Activated B cell treated with CpG ODN at 0.5 μM for 24 hours (primary cell): ENCODE measurements at regions of chr1 and their contacts with region 1.

Region 1: GRCh38 chr1:184075055-184076029 is 23.8 kb downstream of the TSEN15 start:
- DNase-seq: no peak
- ATAC-seq: no peak
- H3K4me3 Mint-ChIP-seq: no peak overlapping the region
- H3K27ac Mint-ChIP-seq: no peak overlapping the region
- H3K4me1 Mint-ChIP-seq: no peaks in the 10 kb centered on the region
- H3K27me3 Mint-ChIP-seq: no peaks in the 10 kb centered on the region
- CTCF ChIP-seq: no peak

Region 2: DNA sequence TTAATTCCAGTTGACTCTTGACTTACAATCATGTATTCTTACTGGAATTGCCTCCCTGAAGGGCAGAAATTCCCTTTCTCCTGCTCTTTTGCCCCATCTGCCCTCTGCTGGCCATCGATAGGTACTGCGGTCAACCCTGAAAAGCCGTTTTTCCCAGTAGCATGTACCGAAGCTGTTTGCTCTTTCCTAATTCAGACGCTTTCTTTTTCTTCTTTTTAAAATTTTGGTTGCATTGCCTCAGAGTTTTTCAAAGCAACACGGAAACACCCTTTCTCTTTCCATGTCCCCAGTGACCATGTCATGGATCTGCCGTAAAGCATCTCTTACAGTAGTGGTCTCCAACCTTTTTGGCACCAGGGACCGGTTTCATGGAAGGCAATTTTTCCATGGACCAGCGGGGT is 147.3 kb after region 1 on chr1:
- CTCF ChIA-PET with region 1: no interaction called
- POLR2A ChIA-PET with region 1: no interaction called
- intact Hi-C with region 1: loop called (anchors 1 kb)
- DNase-seq: no peak
- ATAC-seq: no peak
- H3K4me3 Mint-ChIP-seq: no peak overlapping the region
- H3K27ac Mint-ChIP-seq: no peak overlapping the region
- H3K4me1 Mint-ChIP-seq: no peaks in the 10 kb centered on the region
- H3K27me3 Mint-ChIP-seq: no peaks in the 10 kb centered on the region
- CTCF ChIP-seq: no peak

Region 3: GRCh38 chr1:184563308-184563707 is 488.0 kb after region 1 on chr1:
- CTCF ChIA-PET with region 1: no interaction called
- POLR2A ChIA-PET with region 1: no interaction called
- intact Hi-C with region 1: loop called (anchors 10 kb)
- DNase-seq: no peak
- ATAC-seq: no peak
- H3K4me3 Mint-ChIP-seq: no peak overlapping the region
- H3K27ac Mint-ChIP-seq: no peak overlapping the region
- H3K4me1 Mint-ChIP-seq: no peaks in the 10 kb centered on the region
- H3K27me3 Mint-ChIP-seq: peaks cover 3% of the 10 kb centered on the region
- CTCF ChIP-seq: no peak

Region 4: GRCh38 chr1:184691719-184692324 is 616.5 kb after region 1 on chr1:
- CTCF ChIA-PET with region 1: interaction called, 4 read pairs
- POLR2A ChIA-PET with region 1: no interaction called
- intact Hi-C with region 1: loop called (anchors 2 kb)
- DNase-seq: no peak
- ATAC-seq: no peak
- H3K4me3 Mint-ChIP-seq: no peak overlapping the region
- H3K27ac Mint-ChIP-seq: no peak overlapping the region
- H3K4me1 Mint-ChIP-seq: peaks cover 3% of the 10 kb centered on the region
- H3K27me3 Mint-ChIP-seq: no peaks in the 10 kb centered on the region
- CTCF ChIP-seq: no peak